CD8-positive, alpha-beta memory T cell (primary cell): ENCODE measurements at regions of chr19 and their contacts with region 1.

Region 1: GRCh38 chr19:40662921-40663694 is 27.3 kb downstream of the NUMBL start:
- DNase-seq: peak; percentile 87 to 93 (median 89)
- H3K4me3 ChIP-seq: peak overlapping the region; percentile 71
- H3K4me3 Mint-ChIP-seq: peak overlapping the region; percentile 80 to 93 (median 85)
- H3K27ac ChIP-seq: peak overlapping the region; percentile 59
- H3K27ac Mint-ChIP-seq: peak overlapping the region; percentile 66 to 99 (median 89)
- H3K4me1 ChIP-seq: peaks cover 11% of the 10 kb centered on the region
- H3K4me1 Mint-ChIP-seq: peaks cover 6 to 16% (median 10%) of the 10 kb centered on the region in 3 donors
- H3K27me3 ChIP-seq: no peaks in the 10 kb centered on the region
- H3K27me3 Mint-ChIP-seq: peaks cover 2 to 6% of the 10 kb centered on the region in 2 donors

Region 2: DNA sequence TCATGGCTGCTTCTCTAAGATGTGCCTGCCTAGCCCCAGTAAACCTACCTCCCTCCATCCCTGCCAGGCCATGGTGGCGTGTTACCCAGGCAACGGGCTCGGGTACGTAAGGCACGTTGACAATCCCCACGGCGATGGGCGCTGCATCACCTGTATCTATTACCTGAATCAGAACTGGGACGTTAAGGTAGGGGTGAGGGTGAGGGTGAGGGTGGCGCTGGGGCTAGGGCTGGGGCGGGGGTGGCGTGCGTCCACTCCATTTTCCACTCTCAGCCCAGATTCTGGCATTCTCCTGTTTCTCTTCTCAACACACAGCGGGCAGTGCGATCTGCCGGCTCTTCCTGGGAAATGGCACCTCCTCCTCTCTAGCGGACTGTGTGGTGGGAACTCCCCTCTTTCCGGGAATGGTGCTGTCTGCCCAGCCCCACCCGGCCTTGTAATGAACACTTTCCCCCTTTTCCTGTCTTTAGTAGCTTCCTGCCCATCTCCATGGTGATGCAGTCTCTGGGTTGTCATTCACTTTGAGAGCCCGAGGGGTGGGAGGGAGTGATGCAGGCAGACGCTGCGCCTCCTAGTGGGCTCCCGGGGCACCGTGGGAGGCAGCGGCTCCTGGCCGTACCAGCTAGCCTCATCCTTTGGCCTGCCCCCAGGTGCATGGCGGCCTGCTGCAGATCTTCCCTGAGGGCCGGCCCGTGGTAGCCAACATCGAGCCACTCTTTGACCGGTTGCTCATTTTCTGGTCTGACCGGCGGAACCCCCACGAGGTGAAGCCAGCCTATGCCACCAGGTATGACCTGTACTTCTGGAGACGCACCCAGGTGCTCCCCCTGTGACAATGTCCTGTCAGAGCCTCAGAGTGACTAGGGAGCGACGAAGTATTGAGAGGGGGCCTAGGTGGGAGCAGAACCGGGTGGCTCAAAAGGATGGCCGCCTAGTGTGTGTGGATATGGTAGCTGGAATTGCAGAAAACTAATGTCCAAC is 143.7 kb after region 1 on chr19:
- CTCF ChIA-PET with region 1: interaction called, 33 read pairs
- POLR2A ChIA-PET with region 1: interaction called, 7 read pairs
- DNase-seq: peak; percentile 76 to 86 (median 83)
- H3K4me3 ChIP-seq: peak overlapping the region; percentile 46
- H3K4me3 Mint-ChIP-seq: peak overlapping the region; percentile 60 to 91 (median 82)
- H3K27ac ChIP-seq: peak overlapping the region; percentile 79
- H3K27ac Mint-ChIP-seq: peak overlapping the region; percentile 93 to 100 (median 98)
- H3K4me1 ChIP-seq: peaks cover 80% of the 10 kb centered on the region
- H3K4me1 Mint-ChIP-seq: peaks cover 76 to 86% (median 85%) of the 10 kb centered on the region in 3 donors
- H3K27me3 ChIP-seq: no peaks in the 10 kb centered on the region
- H3K27me3 Mint-ChIP-seq: no peaks in the 10 kb centered on the region

Region 3: DNA sequence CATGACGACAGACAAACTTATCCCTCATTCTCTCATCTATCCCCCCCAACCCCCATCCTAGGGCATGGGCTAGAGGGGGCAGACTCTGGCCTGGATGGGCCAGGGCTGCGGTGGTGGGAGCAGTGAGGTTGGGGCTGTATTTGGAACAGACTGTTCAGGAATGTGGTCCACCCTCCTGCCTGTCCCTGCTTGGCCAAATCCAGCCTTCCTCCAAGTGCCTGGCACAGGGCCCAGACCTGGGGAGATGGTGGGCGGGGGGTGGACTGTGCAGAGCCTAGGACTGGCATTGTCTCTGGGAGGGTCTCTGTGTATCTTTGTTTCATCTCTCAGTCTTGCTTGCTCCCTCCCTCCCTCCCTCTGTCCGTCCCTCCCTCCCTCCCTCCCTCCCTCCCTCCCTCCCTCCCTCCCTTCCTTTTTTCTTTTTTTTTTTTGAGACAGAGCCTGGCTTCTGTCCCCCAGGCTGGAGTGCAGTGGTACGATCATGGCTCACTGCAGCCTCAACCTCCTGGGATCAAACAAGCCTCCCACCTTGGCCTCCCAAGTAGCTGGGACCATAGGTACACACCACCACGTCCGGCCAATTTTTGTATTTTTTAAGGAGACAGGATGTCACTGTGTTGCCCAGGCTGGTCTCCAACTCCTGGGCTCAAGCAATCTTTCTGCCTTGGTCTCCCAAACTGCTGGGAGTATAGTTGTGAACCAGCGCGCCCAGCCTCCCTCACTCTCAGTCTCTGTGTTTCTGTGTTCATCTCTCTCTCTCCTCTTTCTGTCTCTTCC is 150.3 kb after region 1 on chr19:
- CTCF ChIA-PET with region 1: interaction called, 46 read pairs
- POLR2A ChIA-PET with region 1: no interaction called
- DNase-seq: no peak
- H3K4me3 ChIP-seq: no peak overlapping the region
- H3K4me3 Mint-ChIP-seq: peak overlapping the region in 3 of 7 donors; percentile 87 to 92 (median 90)
- H3K27ac ChIP-seq: no peak overlapping the region
- H3K27ac Mint-ChIP-seq: peak overlapping the region in 6 of 8 donors; percentile 25 to 86 (median 34)
- H3K4me1 ChIP-seq: peaks cover 28% of the 10 kb centered on the region
- H3K4me1 Mint-ChIP-seq: peaks cover 30 to 41% (median 40%) of the 10 kb centered on the region in 3 donors
- H3K27me3 ChIP-seq: no peaks in the 10 kb centered on the region
- H3K27me3 Mint-ChIP-seq: peaks cover 0 to 4% of the 10 kb centered on the region in 2 donors

Region 4: GRCh38 chr19:40822161-40822560 is 159.1 kb after region 1 on chr19:
- CTCF ChIA-PET with region 1: interaction called, 46 read pairs
- POLR2A ChIA-PET with region 1: interaction called, 7 read pairs
- DNase-seq: no peak
- H3K4me3 ChIP-seq: no peak overlapping the region
- H3K4me3 Mint-ChIP-seq: no peak overlapping the region
- H3K27ac ChIP-seq: no peak overlapping the region
- H3K27ac Mint-ChIP-seq: peak overlapping the region in 3 of 8 donors; percentile 3 to 84 (median 14)
- H3K4me1 ChIP-seq: peaks cover 33% of the 10 kb centered on the region
- H3K4me1 Mint-ChIP-seq: peaks cover 38 to 62% (median 48%) of the 10 kb centered on the region in 3 donors
- H3K27me3 ChIP-seq: no peaks in the 10 kb centered on the region
- H3K27me3 Mint-ChIP-seq: no peaks in the 10 kb centered on the region

Region 5: GRCh38 chr19:41144403-41144802 is 481.3 kb after region 1 on chr19:
- CTCF ChIA-PET with region 1: interaction called, 30 read pairs
- POLR2A ChIA-PET with region 1: interaction called, 3 read pairs
- DNase-seq: peak; percentile 77 to 90 (median 82)
- H3K4me3 ChIP-seq: no peak overlapping the region
- H3K4me3 Mint-ChIP-seq: no peak overlapping the region
- H3K27ac ChIP-seq: no peak overlapping the region
- H3K27ac Mint-ChIP-seq: peak overlapping the region in 2 of 8 donors; percentile 43 to 66
- H3K4me1 ChIP-seq: no peaks in the 10 kb centered on the region
- H3K4me1 Mint-ChIP-seq: peaks cover 0 to 3% (median 0%) of the 10 kb centered on the region in 3 donors
- H3K27me3 ChIP-seq: no peaks in the 10 kb centered on the region
- H3K27me3 Mint-ChIP-seq: peaks cover 24 to 33% of the 10 kb centered on the region in 2 donors